SK-N-SH (cell line): ENCODE measurements at regions of chr10 and their contacts with region 1.

Region 1: GRCh38 chr10:71064413-71065118 is 147.8 kb upstream of the UNC5B start:
- DNase-seq: no peak
- H3K4me3 ChIP-seq: no peak overlapping the region
- H3K27ac ChIP-seq: no peak overlapping the region
- H3K4me1 ChIP-seq: peaks cover 0 to 26% of the 10 kb centered on the region in 2 experiments; a peak in 1 of 4 replicates
- H3K27me3 ChIP-seq: no peaks in the 10 kb centered on the region
- CTCF ChIP-seq: peak; percentile 18; the same call in 1 of the 2 replicates
- EP300 ChIP-seq: no peak
- RAD21 ChIP-seq: peak; percentile 38

Region 2: GRCh38 chr10:70887804-70888800 is 176.5 kb before region 1 on chr10 and contains the start of gene PCBD1:
- CTCF ChIA-PET with region 1: no interaction called
- POLR2A ChIA-PET with region 1: no interaction called
- DNase-seq: peak; percentile 88
- H3K4me3 ChIP-seq: peak within 1 kb of the TSS; percentile 72 to 76
- H3K27ac ChIP-seq: peak within 1 kb of the TSS; percentile 57 to 96; a peak in 3 of 4 replicates
- H3K4me1 ChIP-seq: peaks cover 6 to 47% of the 10 kb centered on the region in 2 experiments; a peak in 2 of 4 replicates
- H3K27me3 ChIP-seq: no peaks in the 10 kb centered on the region
- CTCF ChIP-seq: no peak
- EP300 ChIP-seq: no peak
- RAD21 ChIP-seq: no peak
- polyA plus RNA-seq, gene PCBD1: 95.9 and 112 TPM in 2 replicates

Region 3: DNA sequence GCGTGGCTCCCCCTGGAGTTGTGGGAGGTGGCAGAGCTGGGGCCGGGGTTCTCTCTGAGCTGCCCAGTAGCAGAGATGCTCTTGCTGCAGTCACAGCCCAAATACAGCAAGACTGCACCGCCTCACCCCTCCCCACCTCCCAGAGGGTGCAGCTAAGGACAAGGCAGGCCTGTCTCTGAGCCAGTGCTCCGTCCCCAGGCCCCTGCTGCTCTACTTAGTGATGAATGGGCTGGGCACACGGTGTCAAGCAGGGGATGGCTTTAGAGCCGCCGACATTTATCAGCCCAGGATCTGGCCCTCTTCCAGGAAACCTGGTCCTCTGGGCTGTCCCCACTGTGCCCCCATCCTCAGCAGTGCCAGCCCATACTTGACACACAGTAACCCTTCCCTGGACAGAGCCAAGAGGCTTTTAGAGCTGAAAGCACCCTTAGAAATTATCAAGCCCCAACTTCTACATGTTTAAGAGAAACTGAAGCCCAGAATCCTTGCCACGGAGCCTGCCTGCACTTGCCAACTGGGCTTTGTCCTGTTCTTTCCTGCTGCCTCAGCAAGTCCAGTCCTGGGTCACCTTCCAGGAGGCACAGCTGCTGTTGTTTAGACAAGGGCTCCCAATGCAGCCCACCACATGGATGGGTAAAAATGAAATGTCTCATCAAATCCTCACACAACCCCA is 10.7 kb after region 1 on chr10:
- CTCF ChIA-PET with region 1: interaction called, 10 read pairs
- POLR2A ChIA-PET with region 1: interaction called, 3 read pairs
- DNase-seq: peak; percentile 86
- H3K4me3 ChIP-seq: no peak overlapping the region
- H3K27ac ChIP-seq: peak overlapping the region in 1 of 2 experiments; percentile 56; a peak in 2 of 4 replicates
- H3K4me1 ChIP-seq: peaks cover 0 to 49% of the 10 kb centered on the region in 2 experiments; a peak in 1 of 4 replicates
- H3K27me3 ChIP-seq: 0 out of 2 replicates have a peak, but pooled peaks cover 5% of the 10 kb centered on the region
- CTCF ChIP-seq: no peak
- EP300 ChIP-seq: peak in 1 of 2 experiments; percentile 72; a peak in 2 of 4 replicates
- RAD21 ChIP-seq: no peak

Region 4: GRCh38 chr10:71191531-71192076 is 127.0 kb after region 1 on chr10:
- CTCF ChIA-PET with region 1: no interaction called
- POLR2A ChIA-PET with region 1: no interaction called
- DNase-seq: peak; percentile 80
- H3K4me3 ChIP-seq: no peak overlapping the region; a peak in 1 of 4 replicates
- H3K27ac ChIP-seq: peak overlapping the region in 1 of 2 experiments; percentile 45; a peak in 2 of 4 replicates
- H3K4me1 ChIP-seq: peaks cover 0 to 15% of the 10 kb centered on the region in 2 experiments; a peak in 1 of 4 replicates
- H3K27me3 ChIP-seq: no peaks in the 10 kb centered on the region; the same call in 1 of the 2 replicates
- CTCF ChIP-seq: no peak
- EP300 ChIP-seq: no peak
- RAD21 ChIP-seq: no peak